PC-3 (cell line): ENCODE measurements at regions of chr20 and their contacts with region 1.

Region 1: GRCh38 chr20:50750145-50750671 is 18.8 kb downstream of the PARD6B start:
- DNase-seq: no peak
- ATAC-seq: no peak
- H3K4me3 ChIP-seq: no peak overlapping the region
- H3K27ac ChIP-seq: no peak overlapping the region
- H3K4me1 ChIP-seq: peaks cover 19% of the 10 kb centered on the region
- H3K27me3 ChIP-seq: no peaks in the 10 kb centered on the region
- CTCF ChIP-seq: no peak

Region 2: DNA sequence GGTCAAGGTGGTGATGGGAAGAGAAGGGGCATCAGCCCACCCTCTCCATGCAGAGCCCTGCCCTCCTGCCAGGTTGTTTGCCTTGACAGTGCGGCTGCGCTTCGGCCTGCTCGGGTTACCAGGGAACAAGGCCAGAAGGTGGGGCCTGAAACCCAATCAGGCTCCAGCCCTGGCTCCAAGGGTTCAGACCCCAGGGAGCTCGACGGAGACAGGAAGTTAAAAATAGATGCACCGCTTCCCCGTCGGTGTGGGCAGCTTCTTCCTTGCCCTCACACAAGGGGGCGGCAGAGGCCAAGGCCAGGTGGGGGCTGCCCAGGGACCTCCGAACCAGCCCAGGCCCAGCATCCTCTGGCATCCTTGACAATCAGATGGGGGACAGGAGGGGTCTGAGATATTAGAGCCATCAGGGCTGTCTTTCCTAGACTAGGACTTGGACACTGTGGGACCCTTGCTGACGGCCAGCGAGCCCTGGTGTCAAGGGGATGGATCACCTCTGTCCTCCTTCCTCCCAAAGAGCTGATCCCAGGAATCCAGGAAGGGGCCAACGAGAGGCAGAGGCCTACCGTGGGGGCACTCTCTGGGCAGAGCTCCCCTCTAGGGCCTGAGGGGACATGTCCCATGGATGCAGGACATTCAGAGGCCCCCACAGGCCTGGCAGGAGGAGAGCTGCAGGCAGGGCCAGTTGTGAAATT is 124.1 kb before region 1 on chr20:
- CTCF ChIA-PET with region 1: interaction called, 45 read pairs
- POLR2A ChIA-PET with region 1: no interaction called
- intact Hi-C with region 1: loop called (anchors 1 kb)
- DNase-seq: peak; percentile 72
- ATAC-seq: peak; percentile 70
- H3K4me3 ChIP-seq: no peak overlapping the region
- H3K27ac ChIP-seq: no peak overlapping the region
- H3K4me1 ChIP-seq: peaks cover 9% of the 10 kb centered on the region
- H3K27me3 ChIP-seq: no peaks in the 10 kb centered on the region
- CTCF ChIP-seq: peak; percentile 98

Region 3: DNA sequence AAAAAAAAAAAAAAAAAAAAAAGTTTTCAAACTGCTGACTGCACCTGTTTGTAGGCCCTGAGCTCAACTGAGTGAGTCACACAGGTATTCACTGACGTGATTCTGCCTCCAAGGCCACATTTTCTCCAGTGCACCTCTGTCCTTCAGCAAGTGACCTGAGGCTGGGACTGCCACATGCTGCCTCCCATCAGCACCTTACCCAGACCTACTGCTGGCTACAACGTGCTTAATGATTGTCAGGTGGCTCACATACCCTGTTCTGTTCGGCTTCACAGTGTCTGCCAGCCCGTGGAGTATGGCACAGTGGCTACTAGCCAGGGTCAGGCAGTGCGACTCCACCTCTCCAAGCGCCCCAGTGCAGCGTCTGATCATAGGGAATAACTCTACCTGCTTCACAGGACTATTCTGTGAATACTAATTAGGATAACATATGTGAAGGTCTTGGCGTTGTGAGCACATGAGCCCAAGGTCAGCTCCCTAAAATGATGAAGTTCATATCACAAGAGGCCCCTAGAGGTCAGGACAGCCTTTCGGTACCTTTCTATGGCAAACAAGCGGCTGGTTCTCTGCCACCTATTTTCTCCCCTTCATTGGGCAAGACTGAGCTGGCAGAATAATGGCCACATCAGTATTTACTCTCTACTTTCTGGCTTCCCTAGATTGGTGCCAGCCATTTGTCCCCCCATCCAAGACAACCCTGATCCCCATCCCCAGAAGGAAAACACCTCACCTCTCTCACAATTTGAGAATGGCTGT is 86.9 kb before region 1 on chr20:
- CTCF ChIA-PET with region 1: interaction called, 21 read pairs
- POLR2A ChIA-PET with region 1: no interaction called
- intact Hi-C with region 1: no loop called
- DNase-seq: peak; percentile 83
- ATAC-seq: peak; percentile 57
- H3K4me3 ChIP-seq: no peak overlapping the region
- H3K27ac ChIP-seq: peak overlapping the region; percentile 43
- H3K4me1 ChIP-seq: peaks cover 44% of the 10 kb centered on the region
- H3K27me3 ChIP-seq: no peaks in the 10 kb centered on the region
- CTCF ChIP-seq: peak; percentile 59

Region 4: DNA sequence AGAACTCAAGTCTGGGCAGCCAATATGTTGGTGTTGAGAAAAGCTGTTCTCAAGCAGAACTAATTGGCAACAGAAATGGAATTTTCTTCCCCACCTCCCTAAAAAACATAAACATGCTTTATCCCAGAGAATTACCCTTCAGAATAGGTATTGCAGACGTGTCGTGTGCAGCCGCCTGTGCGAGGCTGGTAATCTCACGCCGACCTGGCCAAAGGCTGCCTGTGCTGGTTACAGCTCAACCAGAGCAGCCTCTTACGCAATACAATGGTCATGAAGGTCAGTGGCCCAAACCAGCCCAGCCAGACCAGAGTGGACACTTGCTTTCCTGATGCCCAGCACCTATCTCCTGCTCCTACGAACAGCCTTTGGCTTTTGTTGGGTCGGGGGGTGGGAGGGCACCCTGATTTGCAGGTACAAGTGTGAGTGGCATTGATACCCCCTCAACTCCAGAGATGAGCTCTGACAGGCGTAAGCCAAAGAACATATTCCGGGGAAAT is 69.7 kb before region 1 on chr20:
- CTCF ChIA-PET with region 1: interaction called, 3 read pairs
- POLR2A ChIA-PET with region 1: interaction called, 13 read pairs
- intact Hi-C with region 1: no loop called
- DNase-seq: no peak
- ATAC-seq: no peak
- H3K4me3 ChIP-seq: no peak overlapping the region
- H3K27ac ChIP-seq: no peak overlapping the region
- H3K4me1 ChIP-seq: peaks cover 6% of the 10 kb centered on the region; the same call in 1 of the 2 replicates
- H3K27me3 ChIP-seq: no peaks in the 10 kb centered on the region
- CTCF ChIP-seq: no peak

Region 5: GRCh38 chr20:50731055-50731871 is 18.9 kb before region 1 on chr20 and contains the start of gene PARD6B:
- CTCF ChIA-PET with region 1: interaction called, 12 read pairs
- POLR2A ChIA-PET with region 1: interaction called, 5 read pairs
- intact Hi-C with region 1: loop called (anchors 2 kb)
- DNase-seq: peak; percentile 100
- ATAC-seq: peak; percentile 83
- H3K4me3 ChIP-seq: peak within 1 kb of the TSS; percentile 79
- H3K27ac ChIP-seq: peak within 1 kb of the TSS; percentile 6; the same call in 1 of the 2 replicates
- H3K4me1 ChIP-seq: peaks cover 60% of the 10 kb centered on the region
- H3K27me3 ChIP-seq: no peaks in the 10 kb centered on the region
- CTCF ChIP-seq: no peak
- total RNA-seq, gene PARD6B: 3.7 and 4.3 TPM in 2 replicates

Region 6: GRCh38 chr20:51116771-51117686 is 366.8 kb after region 1 on chr20:
- CTCF ChIA-PET with region 1: no interaction called
- POLR2A ChIA-PET with region 1: no interaction called
- intact Hi-C with region 1: no loop called
- DNase-seq: peak; percentile 51
- ATAC-seq: peak; percentile 11; the same call in 1 of the 2 replicates
- H3K4me3 ChIP-seq: no peak overlapping the region
- H3K27ac ChIP-seq: no peak overlapping the region
- H3K4me1 ChIP-seq: peaks cover 23% of the 10 kb centered on the region
- H3K27me3 ChIP-seq: no peaks in the 10 kb centered on the region
- CTCF ChIP-seq: no peak